ENCODE measurements at regions of chr5 and their contacts with region 1.

Region 1: DNA sequence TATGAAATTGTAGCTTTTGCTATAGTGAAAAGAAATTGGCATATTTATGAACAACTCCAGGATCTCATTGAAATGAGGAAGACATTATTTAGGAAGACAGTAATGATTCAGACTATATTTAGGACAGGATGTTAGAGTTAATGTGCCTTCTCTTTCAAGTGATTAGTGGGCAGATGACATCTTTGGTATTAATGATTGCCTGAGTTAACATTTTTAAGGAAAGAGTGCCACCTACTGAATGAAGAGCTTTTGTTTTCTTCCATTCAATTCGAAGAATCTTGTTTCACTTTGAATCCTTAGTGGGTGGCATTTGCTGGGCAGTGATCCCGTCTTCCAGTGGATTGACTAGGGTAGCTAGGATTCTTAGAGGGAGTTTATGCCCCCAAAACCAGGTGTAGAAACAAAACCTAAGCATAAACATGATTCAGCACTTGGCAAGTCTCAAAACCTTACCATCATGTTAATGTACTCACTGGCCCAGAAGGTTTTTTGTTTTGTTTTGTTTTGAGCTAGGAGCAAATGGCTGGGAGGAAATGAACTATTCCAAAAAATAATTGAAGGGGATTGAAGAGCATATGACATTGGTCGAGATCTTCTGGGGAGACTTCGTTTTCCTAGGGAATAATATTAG is 23.2 kb downstream of the MAP3K1 start:
- DNase-seq: no peak
- H3K4me3 ChIP-seq: no peak overlapping the region
- CTCF ChIP-seq: no peak
- POLR2A ChIP-seq: no peak

Region 2: GRCh38 chr5:56270568-56271392 is 567.7 kb before region 1 on chr5:
- intact Hi-C with region 1: loop called (anchors 5 kb)
- DNase-seq: peak; percentile 81 to 96
- H3K4me3 ChIP-seq: no peak overlapping the region
- CTCF ChIP-seq: peak in 1 of 3 donors; percentile 95
- POLR2A ChIP-seq: no peak

Measured in lower leg skin (tissue), 4 donors.